ENCODE measurements at regions of chr18 and their contacts with region 1.

Region 1: GRCh38 chr18:75489493-75490190 is 62.1 kb upstream of the SMIM21 start:
- DNase-seq: no peak
- H3K4me3 ChIP-seq: no peak overlapping the region
- H3K27ac ChIP-seq: no peak overlapping the region
- H3K27me3 ChIP-seq: no peaks in the 10 kb centered on the region
- CTCF ChIP-seq: no peak

Region 2: GRCh38 chr18:74963820-74964446 is 525.7 kb before region 1 on chr18:
- intact Hi-C with region 1: loop called in 1 of 2 experiments (anchors 10 kb)
- DNase-seq: peak in 2 of 10 donors; percentile 39
- H3K4me3 ChIP-seq: no peak overlapping the region
- H3K27ac ChIP-seq: no peak overlapping the region
- H3K27me3 ChIP-seq: no peaks in the 10 kb centered on the region
- CTCF ChIP-seq: peak in 54 of 56 donors; percentile 21 to 76 (median 53)

Region 3: GRCh38 chr18:75548353-75548905 is 58.8 kb after region 1 on chr18:
- intact Hi-C with region 1: no loop called
- DNase-seq: no peak
- H3K4me3 ChIP-seq: no peak overlapping the region
- H3K27ac ChIP-seq: no peak overlapping the region
- H3K27me3 ChIP-seq: peaks cover 0 to 6% (median 0%) of the 10 kb centered on the region in 45 donors
- CTCF ChIP-seq: no peak

Measured in dorsolateral prefrontal cortex (tissue), 120 donors.